Activated B cell treated with CpG ODN at 0.5 μM for 24 hours (primary cell): ENCODE measurements at regions of chr3 and their contacts with region 1.

Region 1: DNA sequence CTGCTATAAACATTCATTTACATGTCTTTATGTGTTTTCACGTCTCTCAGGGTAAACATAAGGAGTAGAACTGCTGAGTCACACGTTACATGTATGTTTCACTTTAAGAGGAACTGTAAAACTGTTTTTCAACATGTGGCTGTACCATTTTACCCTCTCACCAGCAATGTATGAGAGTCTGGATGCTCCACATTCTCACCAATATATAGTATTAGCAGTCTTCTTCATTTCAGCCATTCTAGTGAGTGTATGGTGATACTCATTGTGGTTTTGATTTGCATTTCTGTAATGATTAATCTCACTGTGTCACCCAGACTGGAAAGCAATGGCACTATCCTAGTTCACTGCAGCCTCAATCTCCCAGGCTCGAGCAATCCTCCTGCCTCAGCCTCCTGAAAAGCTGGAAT is 37.1 kb downstream of the PHC3 start:
- DNase-seq: no peak
- ATAC-seq: peak; percentile 90
- H3K4me3 Mint-ChIP-seq: no peak overlapping the region
- H3K27ac Mint-ChIP-seq: peak overlapping the region; percentile 12
- H3K4me1 Mint-ChIP-seq: peaks cover 22% of the 10 kb centered on the region
- H3K27me3 Mint-ChIP-seq: no peaks in the 10 kb centered on the region
- CTCF ChIP-seq: no peak

Region 2: GRCh38 chr3:170128977-170129431 is 15.4 kb before region 1 on chr3:
- CTCF ChIA-PET with region 1: no interaction called
- POLR2A ChIA-PET with region 1: interaction called, 3 read pairs
- intact Hi-C with region 1: loop called (anchors 2 kb)
- DNase-seq: no peak
- ATAC-seq: peak; percentile 56
- H3K4me3 Mint-ChIP-seq: peak overlapping the region; percentile 9
- H3K27ac Mint-ChIP-seq: peak overlapping the region; percentile 57
- H3K4me1 Mint-ChIP-seq: peaks cover 20% of the 10 kb centered on the region
- H3K27me3 Mint-ChIP-seq: no peaks in the 10 kb centered on the region
- CTCF ChIP-seq: no peak

Region 3: DNA sequence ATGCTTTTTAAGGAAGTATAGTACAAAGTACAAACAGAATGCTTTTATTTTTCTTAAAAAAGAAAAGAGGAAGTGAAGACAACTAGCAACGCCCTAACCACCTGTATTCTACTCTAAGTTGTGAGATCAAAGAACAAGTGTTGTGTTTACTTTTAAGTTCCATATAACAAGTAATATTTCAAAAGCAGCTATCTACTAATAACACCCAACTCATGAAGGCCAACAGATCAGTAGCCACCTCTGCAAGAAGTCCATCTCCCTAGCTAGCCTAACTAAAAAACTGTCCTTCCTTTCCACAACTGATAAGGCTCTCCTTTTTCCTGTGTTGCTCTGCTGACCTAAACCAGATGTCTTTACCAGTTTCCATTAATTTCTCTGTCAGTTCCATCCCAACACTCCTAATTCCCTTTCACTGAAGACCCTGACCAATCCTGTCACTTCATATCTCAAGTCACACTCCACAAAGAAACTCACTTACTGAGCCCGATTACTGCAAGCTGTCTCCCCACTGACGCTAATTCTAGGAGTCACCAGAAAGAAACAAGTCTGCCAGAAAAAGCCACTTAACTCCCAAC is 10.2 kb after region 1 on chr3:
- CTCF ChIA-PET with region 1: interaction called, 3 read pairs
- POLR2A ChIA-PET with region 1: interaction called, 6 read pairs
- intact Hi-C with region 1: loop called (anchors 1 kb)
- DNase-seq: no peak
- ATAC-seq: peak; percentile 87
- H3K4me3 Mint-ChIP-seq: peak overlapping the region; percentile 78
- H3K27ac Mint-ChIP-seq: peak overlapping the region; percentile 99
- H3K4me1 Mint-ChIP-seq: peaks cover 66% of the 10 kb centered on the region
- H3K27me3 Mint-ChIP-seq: no peaks in the 10 kb centered on the region
- CTCF ChIP-seq: no peak

Region 4: DNA sequence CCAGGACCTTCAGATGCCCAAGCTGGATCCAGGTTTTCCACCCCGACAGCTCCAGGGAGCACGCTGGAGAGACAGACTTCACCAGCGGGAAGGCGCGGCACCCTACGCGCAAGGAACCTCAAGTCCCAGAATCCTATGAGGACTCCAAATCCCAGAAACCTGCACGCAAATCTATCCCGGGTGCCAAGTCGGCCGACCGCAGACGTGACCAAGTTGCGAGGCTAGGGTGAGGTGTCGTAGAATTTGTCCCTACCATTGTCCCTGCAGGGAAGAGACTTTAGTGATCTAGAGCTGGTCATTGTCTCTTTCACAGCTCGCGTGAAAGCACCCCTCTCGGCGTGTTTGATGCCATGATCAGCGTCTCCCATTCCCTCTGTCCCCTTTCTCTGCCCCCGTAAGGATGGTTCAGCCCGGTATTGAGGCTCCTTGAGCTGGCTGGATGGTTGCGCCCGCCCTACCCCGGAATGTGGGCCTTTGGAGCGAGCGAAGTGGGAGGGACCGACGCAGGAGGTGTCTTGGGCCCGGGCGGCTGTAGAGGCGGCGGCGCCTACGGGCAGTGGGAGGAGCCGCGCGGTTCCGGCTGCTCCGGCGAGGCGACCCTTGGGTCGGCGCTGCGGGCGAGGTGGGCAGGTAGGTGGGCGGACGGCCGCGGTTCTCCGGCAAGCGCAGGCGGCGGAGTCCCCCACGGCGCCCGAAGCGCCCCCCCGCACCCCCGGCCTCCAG is 77.6 kb after region 1 on chr3 and contains the start of gene PRKCI:
- CTCF ChIA-PET with region 1: no interaction called
- POLR2A ChIA-PET with region 1: no interaction called
- intact Hi-C with region 1: loop called (anchors 5 kb)
- DNase-seq: peak; percentile 64
- ATAC-seq: peak; percentile 94
- H3K4me3 Mint-ChIP-seq: peak within 1 kb of the TSS; percentile 95
- H3K27ac Mint-ChIP-seq: peak within 1 kb of the TSS; percentile 73
- H3K4me1 Mint-ChIP-seq: peaks cover 14% of the 10 kb centered on the region
- H3K27me3 Mint-ChIP-seq: no peaks in the 10 kb centered on the region
- CTCF ChIP-seq: no peak
- total RNA-seq, gene PRKCI: 6.6 and 6.9 TPM in 2 replicates

Region 5: DNA sequence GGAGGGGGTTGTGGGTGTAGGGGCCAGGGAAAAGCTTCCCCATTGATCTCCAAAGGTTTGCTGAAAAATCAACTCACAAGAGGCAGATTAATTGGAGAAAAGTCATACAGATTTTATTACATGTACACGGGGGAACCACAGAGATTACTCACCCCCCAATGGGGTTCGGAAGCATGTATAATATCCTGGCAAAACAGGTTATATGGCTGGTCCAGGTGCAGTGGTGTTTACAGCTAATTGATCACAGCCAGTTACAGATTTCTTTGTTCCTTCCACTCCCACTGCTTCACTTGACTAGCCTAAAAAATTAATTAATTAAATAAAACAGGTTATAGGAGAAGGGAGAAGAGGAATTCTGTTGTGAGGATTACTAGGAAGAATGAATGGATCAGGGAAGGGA is 100.1 kb after region 1 on chr3:
- CTCF ChIA-PET with region 1: no interaction called
- POLR2A ChIA-PET with region 1: no interaction called
- intact Hi-C with region 1: no loop called
- DNase-seq: no peak
- ATAC-seq: no peak
- H3K4me3 Mint-ChIP-seq: no peak overlapping the region
- H3K27ac Mint-ChIP-seq: no peak overlapping the region
- H3K4me1 Mint-ChIP-seq: peaks cover 6% of the 10 kb centered on the region
- H3K27me3 Mint-ChIP-seq: no peaks in the 10 kb centered on the region
- CTCF ChIP-seq: no peak

Region 6: DNA sequence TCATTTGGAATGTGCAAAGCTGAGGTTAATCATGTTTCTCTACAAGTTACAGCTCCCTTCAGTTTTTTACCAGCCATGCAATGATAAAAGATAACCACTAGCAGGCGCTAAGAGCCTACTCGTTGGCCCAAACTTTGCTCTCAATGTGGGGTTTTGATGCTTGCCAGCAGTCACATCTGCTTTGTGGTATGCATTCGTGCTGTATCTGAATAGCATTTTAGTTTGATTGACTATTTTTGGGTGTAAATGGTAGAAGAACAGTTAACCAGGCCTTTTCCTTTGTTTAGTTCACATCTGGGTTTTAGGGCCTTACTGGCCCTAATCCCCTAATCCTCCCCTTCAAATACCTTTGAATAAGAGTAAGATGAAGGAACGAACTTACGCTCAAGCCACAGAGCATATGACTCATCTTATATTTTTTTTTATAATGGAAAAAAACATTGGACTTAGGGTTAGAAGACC is 269.8 kb after region 1 on chr3:
- CTCF ChIA-PET with region 1: no interaction called
- POLR2A ChIA-PET with region 1: no interaction called
- intact Hi-C with region 1: no loop called
- DNase-seq: no peak
- ATAC-seq: peak; percentile 72
- H3K4me3 Mint-ChIP-seq: no peak overlapping the region
- H3K27ac Mint-ChIP-seq: no peak overlapping the region
- H3K4me1 Mint-ChIP-seq: peaks cover 9% of the 10 kb centered on the region
- H3K27me3 Mint-ChIP-seq: peaks cover 15% of the 10 kb centered on the region
- CTCF ChIP-seq: peak; percentile 98